ENCODE measurements at regions of chr18 and their contacts with region 1.

Region 1: DNA sequence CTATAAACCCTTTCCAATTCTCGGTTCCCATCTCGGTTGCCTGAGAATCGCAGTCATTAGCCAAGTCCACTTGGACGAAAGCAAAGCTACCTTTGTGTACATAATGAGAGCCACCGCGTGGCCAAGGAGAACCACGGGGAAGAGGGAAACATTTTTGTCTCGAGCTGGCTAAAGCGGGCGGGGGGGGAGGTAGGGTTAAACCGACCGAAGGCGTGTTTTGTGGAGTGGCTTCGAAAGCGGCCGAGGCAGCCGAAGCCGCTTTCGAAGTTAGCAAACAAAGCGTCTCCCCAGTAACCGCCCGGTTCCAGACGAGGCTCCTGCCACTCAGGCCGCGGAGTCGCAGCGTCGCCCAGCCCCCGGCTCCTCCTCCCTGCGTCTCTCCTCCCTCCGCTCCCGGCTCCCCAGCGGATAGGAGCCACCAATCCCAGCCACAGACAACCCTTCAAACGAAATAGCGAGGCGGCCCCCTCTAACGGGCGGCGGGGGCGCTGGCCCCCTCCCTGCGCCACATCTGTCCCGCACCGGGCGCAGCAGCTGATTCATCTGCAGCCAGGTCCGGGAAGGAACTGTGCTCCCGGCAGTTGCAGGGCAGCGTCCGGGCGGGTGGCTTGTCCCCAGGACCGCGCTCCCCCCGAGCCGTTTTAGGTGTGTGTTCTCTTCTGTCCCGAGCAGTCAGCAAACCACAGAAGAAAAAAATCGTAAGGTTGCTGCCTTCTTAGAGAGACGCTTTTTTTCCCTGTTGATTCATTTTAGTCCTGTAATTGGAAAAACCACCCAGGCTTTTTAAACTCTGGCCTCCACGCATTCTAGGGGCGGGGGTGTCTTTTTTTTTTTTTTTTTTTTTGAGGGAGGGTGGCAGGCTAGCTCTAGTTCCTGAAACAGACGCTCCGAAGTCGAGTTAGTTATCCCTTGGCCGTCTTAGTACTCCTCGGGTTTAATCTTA is 1.8 kb upstream of the TGIF1 start:
- DNase-seq: peak; percentile 65 to 94 (median 86)
- ATAC-seq: peak; percentile 41
- H3K4me3 ChIP-seq: peak overlapping the region; percentile 66 to 95
- H3K4me3 Mint-ChIP-seq: peak overlapping the region; percentile 90
- H3K27ac ChIP-seq: peak overlapping the region; percentile 95 to 100
- H3K27ac Mint-ChIP-seq: peak overlapping the region; percentile 99
- H3K4me1 ChIP-seq: peaks cover 15% of the 10 kb centered on the region
- H3K4me1 Mint-ChIP-seq: peaks cover 39% of the 10 kb centered on the region
- H3K27me3 ChIP-seq: no peaks in the 10 kb centered on the region
- H3K27me3 Mint-ChIP-seq: no peaks in the 10 kb centered on the region
- CTCF ChIP-seq: no peak

Region 2: GRCh38 chr18:3012964-3013804 is 435.0 kb before region 1 on chr18 and contains the start of gene LPIN2:
- CTCF ChIA-PET with region 1: no interaction called
- POLR2A ChIA-PET with region 1: no interaction called
- intact Hi-C with region 1: loop called in 1 of 2 experiments (anchors 5 kb)
- DNase-seq: peak; percentile 93 to 98 (median 95)
- ATAC-seq: peak; percentile 87
- H3K4me3 ChIP-seq: peak within 1 kb of the TSS; percentile 53
- H3K4me3 Mint-ChIP-seq: peak within 1 kb of the TSS; percentile 95
- H3K27ac ChIP-seq: peak within 1 kb of the TSS; percentile 73 to 79
- H3K27ac Mint-ChIP-seq: peak within 1 kb of the TSS; percentile 93
- H3K4me1 ChIP-seq: peaks cover 55% of the 10 kb centered on the region
- H3K4me1 Mint-ChIP-seq: peaks cover 64% of the 10 kb centered on the region
- H3K27me3 ChIP-seq: no peaks in the 10 kb centered on the region
- H3K27me3 Mint-ChIP-seq: no peaks in the 10 kb centered on the region
- CTCF ChIP-seq: no peak
- total RNA-seq, gene LPIN2: 50.3 to 50.9 TPM

Region 3: GRCh38 chr18:3245853-3246634 is 202.1 kb before region 1 on chr18:
- CTCF ChIA-PET with region 1: interaction called, 5 read pairs
- POLR2A ChIA-PET with region 1: interaction called, 29 read pairs
- intact Hi-C with region 1: loop called in 1 of 2 experiments (anchors 1 kb)
- DNase-seq: peak; percentile 44 to 89 (median 78)
- ATAC-seq: peak; percentile 60
- H3K4me3 ChIP-seq: peak overlapping the region; percentile 77 to 90
- H3K4me3 Mint-ChIP-seq: peak overlapping the region; percentile 92
- H3K27ac ChIP-seq: peak overlapping the region; percentile 79 to 89
- H3K27ac Mint-ChIP-seq: peak overlapping the region; percentile 90
- H3K4me1 ChIP-seq: peaks cover 11% of the 10 kb centered on the region
- H3K4me1 Mint-ChIP-seq: peaks cover 39% of the 10 kb centered on the region
- H3K27me3 ChIP-seq: no peaks in the 10 kb centered on the region
- H3K27me3 Mint-ChIP-seq: no peaks in the 10 kb centered on the region
- CTCF ChIP-seq: peak; percentile 84

Region 4: GRCh38 chr18:3281456-3282400 is 166.4 kb before region 1 on chr18:
- CTCF ChIA-PET with region 1: interaction called, 53 read pairs
- POLR2A ChIA-PET with region 1: interaction called, 4 read pairs
- intact Hi-C with region 1: no loop called
- DNase-seq: peak in 2 of 9 experiments; percentile 77 to 84
- ATAC-seq: peak; percentile 93
- H3K4me3 ChIP-seq: no peak overlapping the region
- H3K4me3 Mint-ChIP-seq: no peak overlapping the region
- H3K27ac ChIP-seq: no peak overlapping the region
- H3K27ac Mint-ChIP-seq: no peak overlapping the region
- H3K4me1 ChIP-seq: no peaks in the 10 kb centered on the region
- H3K4me1 Mint-ChIP-seq: peaks cover 4% of the 10 kb centered on the region
- H3K27me3 ChIP-seq: no peaks in the 10 kb centered on the region
- H3K27me3 Mint-ChIP-seq: no peaks in the 10 kb centered on the region
- CTCF ChIP-seq: peak; percentile 75

Region 5: DNA sequence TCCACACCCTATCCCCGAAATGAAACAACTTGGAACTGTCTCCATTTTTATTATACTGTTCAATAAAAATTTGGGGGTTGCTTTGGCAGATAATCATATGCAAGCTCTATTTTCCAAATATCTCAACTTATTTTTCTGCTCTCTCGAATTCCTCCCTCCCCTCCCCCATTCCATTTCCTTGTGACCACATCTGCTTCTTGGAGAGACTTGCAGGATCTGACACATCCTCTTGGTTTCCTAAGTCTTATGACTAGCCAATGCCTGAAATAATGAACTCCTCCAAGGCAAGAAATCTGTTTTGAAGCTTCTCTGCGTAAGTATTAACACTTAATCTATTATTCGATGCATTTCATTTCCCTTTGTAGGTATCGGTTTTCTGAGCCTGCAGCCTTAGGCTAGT is 17.9 kb after region 1 on chr18:
- CTCF ChIA-PET with region 1: interaction called, 6 read pairs
- POLR2A ChIA-PET with region 1: interaction called, 34 read pairs
- intact Hi-C with region 1: no loop called
- DNase-seq: no peak
- ATAC-seq: no peak
- H3K4me3 ChIP-seq: no peak overlapping the region
- H3K4me3 Mint-ChIP-seq: no peak overlapping the region
- H3K27ac ChIP-seq: no peak overlapping the region
- H3K27ac Mint-ChIP-seq: no peak overlapping the region
- H3K4me1 ChIP-seq: peaks cover 16% of the 10 kb centered on the region
- H3K4me1 Mint-ChIP-seq: peaks cover 20% of the 10 kb centered on the region
- H3K27me3 ChIP-seq: no peaks in the 10 kb centered on the region
- H3K27me3 Mint-ChIP-seq: no peaks in the 10 kb centered on the region
- CTCF ChIP-seq: no peak

Region 6: GRCh38 chr18:5295981-5296705 is 1848.0 kb after region 1 on chr18:
- CTCF ChIA-PET with region 1: no interaction called
- POLR2A ChIA-PET with region 1: interaction called, 3 read pairs
- intact Hi-C with region 1: loop called (anchors 5 kb)
- DNase-seq: peak; percentile 93 to 98 (median 96)
- ATAC-seq: peak; percentile 69
- H3K4me3 ChIP-seq: peak overlapping the region; percentile 79 to 92
- H3K4me3 Mint-ChIP-seq: peak overlapping the region; percentile 93
- H3K27ac ChIP-seq: peak overlapping the region; percentile 90 to 94
- H3K27ac Mint-ChIP-seq: peak overlapping the region; percentile 97
- H3K4me1 ChIP-seq: peaks cover 27% of the 10 kb centered on the region
- H3K4me1 Mint-ChIP-seq: peaks cover 32% of the 10 kb centered on the region
- H3K27me3 ChIP-seq: no peaks in the 10 kb centered on the region
- H3K27me3 Mint-ChIP-seq: peaks cover 5% of the 10 kb centered on the region
- CTCF ChIP-seq: no peak